ENCODE measurements at regions of chr3 and their contacts with region 1.

Region 1: GRCh38 chr3:172039436-172040077 is at the start of gene FNDC3B:
- DNase-seq: peak; percentile 97
- H3K4me3 ChIP-seq: peak within 1 kb of the TSS; percentile 86 to 100 (median 94)
- H3K27ac ChIP-seq: peak within 1 kb of the TSS; percentile 96
- H3K4me1 ChIP-seq: peaks cover 34% of the 10 kb centered on the region
- H3K27me3 ChIP-seq: no peaks in the 10 kb centered on the region
- CTCF ChIP-seq: no peak
- POLR2A ChIP-seq: peak; percentile 75
- total RNA-seq, gene FNDC3B: 295 and 302 TPM in 2 replicates

Region 2: DNA sequence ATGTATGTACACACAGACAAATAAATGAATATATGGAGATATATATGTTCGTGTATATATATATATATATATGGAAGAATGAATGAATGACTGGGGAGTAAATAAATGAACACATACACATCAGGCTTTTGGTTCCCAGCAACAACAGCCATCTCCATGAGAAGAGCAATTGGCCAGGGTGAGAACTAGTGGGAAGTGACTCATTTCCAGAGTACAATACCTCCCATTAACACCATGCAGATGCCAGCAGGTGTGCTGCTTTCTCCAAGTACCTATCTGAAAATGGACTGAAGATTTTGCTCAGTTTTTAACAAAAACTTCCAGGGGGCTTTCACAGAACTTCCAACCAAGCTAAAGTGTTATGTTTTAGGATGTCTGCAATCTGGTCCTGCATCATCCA is 833.3 kb before region 1 on chr3:
- CTCF ChIA-PET with region 1: no interaction called
- POLR2A ChIA-PET with region 1: no interaction called
- dilution Hi-C with region 1: no loop called
- intact Hi-C with region 1: loop called (anchors 5 kb)
- DNase-seq: peak; percentile 74
- H3K4me3 ChIP-seq: no peak overlapping the region
- H3K27ac ChIP-seq: peak overlapping the region; percentile 91
- H3K4me1 ChIP-seq: peaks cover 39% of the 10 kb centered on the region
- H3K27me3 ChIP-seq: no peaks in the 10 kb centered on the region
- CTCF ChIP-seq: no peak
- POLR2A ChIP-seq: no peak

Region 3: DNA sequence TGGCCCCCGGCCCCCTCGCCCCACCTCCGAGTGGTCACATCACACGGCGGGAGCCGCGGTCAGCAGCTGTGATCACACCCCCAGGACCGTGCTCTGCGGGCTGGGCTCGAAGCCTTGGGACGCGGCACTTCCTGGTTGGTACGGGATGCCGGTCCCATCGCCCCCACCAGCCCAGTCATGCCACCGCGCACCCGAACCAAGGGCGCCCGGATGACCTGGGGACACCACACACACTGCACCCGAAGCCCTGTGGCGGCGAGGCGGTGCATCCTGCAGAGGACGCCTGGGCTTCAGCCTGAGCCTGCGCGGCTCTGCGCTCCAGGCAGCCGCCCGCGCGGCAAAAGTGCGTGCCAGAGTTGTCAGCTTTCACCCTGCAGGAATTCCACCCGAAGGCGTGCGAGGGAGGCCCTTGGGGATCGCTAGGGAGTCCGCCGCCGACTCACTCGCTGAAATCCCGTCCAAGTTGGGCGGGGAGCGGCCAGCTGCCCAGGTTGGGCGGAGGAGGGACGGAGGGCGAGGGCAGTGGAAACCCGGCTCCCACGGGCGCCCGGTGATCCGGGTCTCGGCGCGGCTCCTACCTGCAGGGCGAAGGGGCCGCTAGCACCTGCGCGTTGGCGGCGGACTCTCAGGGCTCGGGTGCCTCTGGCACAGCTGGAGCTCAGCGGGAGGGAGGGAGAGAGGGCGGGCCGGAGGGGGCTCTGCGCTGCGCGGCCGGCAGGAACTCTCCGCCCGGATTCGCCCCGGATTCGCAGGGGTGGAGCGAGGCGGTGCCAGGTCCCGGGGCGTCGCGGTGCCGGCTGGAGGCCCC is 229.5 kb before region 1 on chr3 and contains the start of gene PLD1:
- CTCF ChIA-PET with region 1: interaction called, 4 read pairs
- POLR2A ChIA-PET with region 1: no interaction called
- dilution Hi-C with region 1: no loop called
- intact Hi-C with region 1: loop called (anchors 1 kb)
- DNase-seq: peak; percentile 79
- H3K4me3 ChIP-seq: peak within 1 kb of the TSS; percentile 35 to 71 (median 60)
- H3K27ac ChIP-seq: peak within 1 kb of the TSS; percentile 93
- H3K4me1 ChIP-seq: peaks cover 45% of the 10 kb centered on the region
- H3K27me3 ChIP-seq: no peaks in the 10 kb centered on the region
- CTCF ChIP-seq: no peak
- POLR2A ChIP-seq: peak; percentile 82
- total RNA-seq, gene PLD1: 75.6 and 108 TPM in 2 replicates

Region 4: DNA sequence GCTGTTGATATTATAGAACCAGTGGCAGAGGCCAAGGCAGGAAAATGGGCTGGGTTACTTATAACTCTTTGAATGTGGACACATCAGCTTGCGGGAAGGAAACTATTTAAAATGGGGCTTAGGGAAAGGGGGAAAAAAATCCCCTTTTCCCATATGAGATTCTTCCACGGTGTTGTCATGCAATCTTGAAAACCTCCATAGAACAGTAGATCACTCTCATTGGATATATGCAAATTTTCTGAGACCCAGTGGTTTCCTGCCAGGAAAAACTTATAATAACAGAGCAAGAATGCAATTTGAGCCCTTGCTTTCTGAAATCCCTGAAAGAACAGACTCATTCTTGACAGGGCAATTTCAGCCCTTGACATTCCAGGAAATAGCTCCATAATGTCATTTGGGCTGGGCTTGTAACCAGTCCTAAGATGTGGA is 165.3 kb before region 1 on chr3:
- CTCF ChIA-PET with region 1: interaction called, 3 read pairs
- POLR2A ChIA-PET with region 1: no interaction called
- dilution Hi-C with region 1: no loop called
- intact Hi-C with region 1: loop called (anchors 1 kb)
- DNase-seq: peak; percentile 98
- H3K4me3 ChIP-seq: no peak overlapping the region
- H3K27ac ChIP-seq: peak overlapping the region; percentile 97
- H3K4me1 ChIP-seq: peaks cover 53% of the 10 kb centered on the region
- H3K27me3 ChIP-seq: no peaks in the 10 kb centered on the region
- CTCF ChIP-seq: no peak
- POLR2A ChIP-seq: peak; percentile 76

Region 5: DNA sequence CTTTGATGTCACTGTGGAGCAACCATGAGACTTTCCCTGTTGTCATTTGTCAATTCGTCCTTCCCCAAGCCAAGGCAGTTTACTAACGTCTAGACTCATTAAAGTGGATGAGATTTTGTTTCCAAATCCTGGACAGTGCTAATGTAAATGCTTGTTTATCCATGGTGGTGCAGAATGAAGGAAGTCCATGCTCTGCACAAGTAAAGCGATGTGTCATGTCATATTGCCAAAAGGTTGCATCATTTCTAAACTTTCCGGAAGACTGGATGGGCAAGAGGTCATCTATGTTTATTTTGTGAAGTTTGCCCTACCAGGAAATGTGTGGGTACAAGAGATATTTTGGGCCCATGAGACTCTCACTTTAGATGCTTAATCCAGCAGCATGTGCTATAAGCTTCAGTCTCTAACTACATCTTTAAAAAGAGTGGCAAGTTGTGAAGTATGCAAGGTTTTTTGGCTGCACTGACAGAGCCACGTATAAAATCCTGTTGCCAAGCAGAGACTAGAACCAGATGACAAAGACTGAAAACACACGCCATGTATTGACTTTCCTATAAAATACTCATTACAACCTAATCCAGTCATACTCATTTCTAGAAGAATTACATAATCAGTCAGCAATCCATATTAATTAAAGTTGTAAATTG is 72.3 kb before region 1 on chr3:
- CTCF ChIA-PET with region 1: no interaction called
- POLR2A ChIA-PET with region 1: no interaction called
- dilution Hi-C with region 1: no loop called
- intact Hi-C with region 1: loop called (anchors 1 kb)
- DNase-seq: peak; percentile 86
- H3K4me3 ChIP-seq: no peak overlapping the region
- H3K27ac ChIP-seq: peak overlapping the region; percentile 71
- H3K4me1 ChIP-seq: peaks cover 20% of the 10 kb centered on the region
- H3K27me3 ChIP-seq: no peaks in the 10 kb centered on the region
- CTCF ChIP-seq: no peak
- POLR2A ChIP-seq: no peak

Region 6: DNA sequence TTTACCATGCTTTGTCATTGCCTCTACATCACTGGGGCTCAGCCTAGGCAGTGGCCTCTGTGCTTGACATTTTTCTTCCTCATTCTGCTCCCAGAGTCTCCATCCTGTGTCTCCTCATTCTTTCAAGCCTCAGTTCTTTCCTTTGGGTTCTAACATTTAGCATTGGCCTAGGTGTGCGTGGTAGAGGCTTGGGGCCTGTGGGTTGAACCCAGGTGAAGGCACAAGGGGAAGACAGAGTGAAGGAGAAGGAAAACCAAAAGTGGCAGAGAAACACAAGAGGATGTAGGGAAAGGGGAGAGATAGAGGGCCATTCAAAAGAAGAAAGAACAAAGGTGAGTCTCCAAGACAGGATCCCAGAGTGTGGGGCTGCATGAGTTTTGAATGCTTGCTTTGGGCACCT is 75.5 kb after region 1 on chr3:
- CTCF ChIA-PET with region 1: no interaction called
- POLR2A ChIA-PET with region 1: no interaction called
- dilution Hi-C with region 1: no loop called
- intact Hi-C with region 1: no loop called
- DNase-seq: no peak
- H3K4me3 ChIP-seq: no peak overlapping the region
- H3K27ac ChIP-seq: no peak overlapping the region
- H3K4me1 ChIP-seq: no peaks in the 10 kb centered on the region
- H3K27me3 ChIP-seq: no peaks in the 10 kb centered on the region
- CTCF ChIP-seq: no peak
- POLR2A ChIP-seq: no peak

Region 7: GRCh38 chr3:172171396-172172075 is 132.0 kb after region 1 on chr3:
- CTCF ChIA-PET with region 1: no interaction called
- POLR2A ChIA-PET with region 1: no interaction called
- dilution Hi-C with region 1: no loop called
- intact Hi-C with region 1: no loop called
- DNase-seq: no peak
- H3K4me3 ChIP-seq: no peak overlapping the region
- H3K27ac ChIP-seq: no peak overlapping the region
- H3K4me1 ChIP-seq: peaks cover 50% of the 10 kb centered on the region
- H3K27me3 ChIP-seq: no peaks in the 10 kb centered on the region
- CTCF ChIP-seq: no peak
- POLR2A ChIP-seq: no peak

Region 8: DNA sequence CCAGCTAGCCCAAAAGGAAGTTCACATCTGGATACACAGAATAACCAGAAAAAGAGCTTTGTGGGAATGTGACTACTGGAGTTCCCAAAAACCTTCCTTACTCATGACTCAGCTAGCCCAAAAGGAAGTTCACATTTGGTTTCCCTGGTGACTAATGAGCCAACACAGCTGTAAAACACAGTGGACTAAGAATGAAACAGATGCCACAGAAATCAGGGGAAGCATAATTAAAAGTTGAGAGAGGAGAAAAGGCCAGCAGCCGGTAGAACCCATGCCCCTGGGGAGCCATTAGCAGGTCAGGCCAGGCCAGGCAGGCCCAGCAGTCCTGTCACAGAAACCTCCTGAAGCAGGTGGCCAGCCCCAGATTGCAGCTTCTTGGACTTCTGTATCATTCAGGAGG is 278.4 kb after region 1 on chr3:
- CTCF ChIA-PET with region 1: no interaction called
- POLR2A ChIA-PET with region 1: no interaction called
- dilution Hi-C with region 1: no loop called
- intact Hi-C with region 1: loop called (anchors 10 kb)
- DNase-seq: peak; percentile 94
- H3K4me3 ChIP-seq: no peak overlapping the region
- H3K27ac ChIP-seq: peak overlapping the region; percentile 96
- H3K4me1 ChIP-seq: peaks cover 32% of the 10 kb centered on the region
- H3K27me3 ChIP-seq: no peaks in the 10 kb centered on the region
- CTCF ChIP-seq: no peak
- POLR2A ChIP-seq: no peak

Measured in endothelial cell of umbilical vein (primary cell).